ENCODE measurements at regions of chr18 and their contacts with region 1.

Region 1: DNA sequence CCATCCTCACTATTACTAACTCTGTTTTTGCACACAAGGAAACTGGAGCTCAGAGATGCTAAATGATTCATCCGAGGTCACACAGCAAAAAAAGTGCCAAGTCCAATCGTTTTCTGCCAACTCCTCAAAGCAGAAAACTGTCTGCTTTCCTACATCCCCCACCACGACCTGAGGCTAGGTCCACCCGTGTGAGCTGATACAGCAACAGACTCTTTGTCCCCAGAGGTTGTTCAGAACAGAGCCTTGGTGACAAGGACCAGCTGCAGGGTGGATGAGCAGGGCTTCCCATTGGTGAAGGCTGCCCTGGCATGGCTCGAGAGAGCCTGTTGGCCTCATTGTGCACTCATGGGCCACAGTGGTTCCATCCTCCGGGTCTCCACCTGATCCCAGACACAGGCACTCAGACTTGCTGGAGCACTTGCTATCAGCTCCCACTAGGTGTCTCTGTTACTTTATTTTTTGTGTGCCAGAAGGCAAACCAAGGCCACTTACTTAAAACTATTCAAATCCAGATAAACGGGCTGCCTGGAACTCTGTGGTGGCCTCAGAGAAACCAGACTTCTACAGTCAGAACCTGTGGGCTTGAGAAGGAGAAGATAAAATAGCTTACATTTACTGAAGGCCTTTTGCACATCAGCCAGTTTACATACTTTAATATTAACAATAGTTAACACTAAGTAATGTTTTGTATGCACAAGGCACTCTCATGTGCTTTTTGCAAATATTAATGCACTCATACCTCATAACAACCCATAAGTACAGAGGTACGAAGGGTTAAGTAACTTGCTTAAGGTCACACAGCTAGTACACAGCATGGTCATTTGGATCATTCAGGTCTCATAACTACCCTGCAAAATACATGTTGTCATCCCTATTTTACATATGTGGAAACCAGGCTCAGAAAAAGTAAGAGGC is 62.9 kb upstream of the CTIF start:
- DNase-seq: peak; percentile 44
- ATAC-seq: peak; percentile 68
- H3K4me3 Mint-ChIP-seq: no peak overlapping the region
- H3K27ac Mint-ChIP-seq: no peak overlapping the region
- H3K4me1 Mint-ChIP-seq: no peaks in the 10 kb centered on the region
- H3K27me3 Mint-ChIP-seq: peaks cover 22% of the 10 kb centered on the region

Region 2: GRCh38 chr18:48663931-48664847 is 188.3 kb after region 1 on chr18:
- CTCF ChIA-PET with region 1: interaction called, 6 read pairs
- POLR2A ChIA-PET with region 1: no interaction called
- intact Hi-C with region 1: loop called (anchors 1 kb)
- DNase-seq: peak; percentile 77
- ATAC-seq: peak; percentile 47
- H3K4me3 Mint-ChIP-seq: no peak overlapping the region
- H3K27ac Mint-ChIP-seq: no peak overlapping the region
- H3K4me1 Mint-ChIP-seq: no peaks in the 10 kb centered on the region
- H3K27me3 Mint-ChIP-seq: peaks cover 3% of the 10 kb centered on the region

Region 3: DNA sequence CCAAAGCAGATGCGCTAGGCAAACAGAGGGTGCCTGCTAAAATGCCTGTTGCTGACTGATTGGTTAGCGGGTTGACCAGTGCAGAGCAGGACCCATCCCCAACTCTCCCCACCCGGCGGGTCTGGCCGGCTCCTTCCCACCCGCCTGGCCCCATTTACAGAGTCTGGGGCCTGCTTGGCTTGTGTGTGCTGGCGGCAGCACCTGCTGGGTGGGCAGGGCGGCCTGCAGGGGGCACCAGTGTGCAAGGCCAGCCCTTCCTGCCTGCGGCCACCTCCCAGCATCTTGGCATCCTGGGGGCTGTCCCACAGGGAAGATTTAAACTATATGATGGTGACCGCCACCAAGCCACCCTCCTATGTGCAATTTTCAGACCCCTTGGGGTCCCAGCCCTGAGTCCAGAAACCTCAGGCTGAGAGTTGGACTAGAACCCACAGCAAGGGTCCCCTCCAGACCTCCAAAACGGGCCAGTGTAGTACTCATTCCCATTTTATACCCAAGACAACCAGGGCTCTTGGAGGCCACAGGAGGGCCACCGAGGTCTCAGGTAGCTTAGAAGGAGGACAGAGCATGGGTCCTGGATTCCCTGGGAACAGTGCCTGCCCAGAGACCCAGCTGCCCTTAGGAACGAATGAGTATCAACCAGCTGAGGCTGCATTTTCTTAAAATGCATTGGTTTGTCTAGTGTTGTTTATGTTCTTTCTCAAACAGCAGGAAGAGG is 301.3 kb after region 1 on chr18:
- CTCF ChIA-PET with region 1: no interaction called
- POLR2A ChIA-PET with region 1: no interaction called
- intact Hi-C with region 1: no loop called
- DNase-seq: peak; percentile 84
- ATAC-seq: peak; percentile 97
- H3K4me3 Mint-ChIP-seq: no peak overlapping the region
- H3K27ac Mint-ChIP-seq: no peak overlapping the region
- H3K4me1 Mint-ChIP-seq: peaks cover 6% of the 10 kb centered on the region
- H3K27me3 Mint-ChIP-seq: peaks cover 3% of the 10 kb centered on the region

Measured in activated CD4-positive, alpha-beta T cell treated with anti-CD3 and anti-CD28 coated beads for 36 hours (primary cell).